ENCODE measurements at regions of chr12 and their contacts with region 1.

Region 1: DNA sequence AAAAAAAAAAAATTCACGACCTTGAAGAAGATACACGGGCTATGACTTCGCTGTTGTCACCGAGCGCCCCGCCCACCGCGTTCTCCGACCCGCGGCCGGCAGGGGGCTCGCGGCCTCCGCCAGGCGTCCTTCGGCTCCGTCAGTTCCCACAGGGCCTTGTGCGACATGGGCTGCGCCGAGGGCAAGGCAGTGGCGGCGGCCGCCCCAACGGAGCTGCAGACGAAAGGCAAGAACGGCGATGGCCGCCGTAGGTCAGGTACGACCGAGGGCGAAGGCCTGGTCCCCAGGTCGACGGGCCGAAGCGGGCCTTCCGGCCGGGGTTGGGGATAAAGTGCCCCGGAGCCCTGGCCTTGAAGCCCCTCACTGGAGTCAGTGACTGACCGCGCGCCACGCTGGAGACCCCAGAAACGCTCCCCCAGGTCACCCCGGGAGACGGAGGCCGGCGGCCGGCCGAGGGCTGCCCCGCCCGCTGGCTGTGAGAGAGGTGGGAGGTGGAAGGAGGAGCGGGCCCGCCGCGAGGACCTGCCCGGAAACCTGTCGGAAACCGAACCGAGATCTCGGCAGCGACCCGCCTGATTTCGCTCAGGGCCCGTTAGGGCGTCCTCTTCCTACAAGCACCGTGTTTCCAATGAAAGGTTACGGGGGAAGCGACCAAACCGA is at the start of gene TXNRD1:
- DNase-seq: peak; percentile 94
- H3K4me3 ChIP-seq: peak within 1 kb of the TSS; percentile 65 to 74 (median 65)
- H3K27ac ChIP-seq: peak within 1 kb of the TSS; percentile 81 to 89 (median 87)
- H3K4me1 ChIP-seq: peaks cover 23 to 39% (median 31%) of the 10 kb centered on the region in 4 donors
- H3K27me3 ChIP-seq: no peaks in the 10 kb centered on the region
- CTCF ChIP-seq: peak; percentile 85 to 87 (median 87)
- EP300 ChIP-seq: no peak
- POLR2A ChIP-seq: no peak
- total RNA-seq, gene TXNRD1: 243 to 594 (median 299) TPM

Region 2: DNA sequence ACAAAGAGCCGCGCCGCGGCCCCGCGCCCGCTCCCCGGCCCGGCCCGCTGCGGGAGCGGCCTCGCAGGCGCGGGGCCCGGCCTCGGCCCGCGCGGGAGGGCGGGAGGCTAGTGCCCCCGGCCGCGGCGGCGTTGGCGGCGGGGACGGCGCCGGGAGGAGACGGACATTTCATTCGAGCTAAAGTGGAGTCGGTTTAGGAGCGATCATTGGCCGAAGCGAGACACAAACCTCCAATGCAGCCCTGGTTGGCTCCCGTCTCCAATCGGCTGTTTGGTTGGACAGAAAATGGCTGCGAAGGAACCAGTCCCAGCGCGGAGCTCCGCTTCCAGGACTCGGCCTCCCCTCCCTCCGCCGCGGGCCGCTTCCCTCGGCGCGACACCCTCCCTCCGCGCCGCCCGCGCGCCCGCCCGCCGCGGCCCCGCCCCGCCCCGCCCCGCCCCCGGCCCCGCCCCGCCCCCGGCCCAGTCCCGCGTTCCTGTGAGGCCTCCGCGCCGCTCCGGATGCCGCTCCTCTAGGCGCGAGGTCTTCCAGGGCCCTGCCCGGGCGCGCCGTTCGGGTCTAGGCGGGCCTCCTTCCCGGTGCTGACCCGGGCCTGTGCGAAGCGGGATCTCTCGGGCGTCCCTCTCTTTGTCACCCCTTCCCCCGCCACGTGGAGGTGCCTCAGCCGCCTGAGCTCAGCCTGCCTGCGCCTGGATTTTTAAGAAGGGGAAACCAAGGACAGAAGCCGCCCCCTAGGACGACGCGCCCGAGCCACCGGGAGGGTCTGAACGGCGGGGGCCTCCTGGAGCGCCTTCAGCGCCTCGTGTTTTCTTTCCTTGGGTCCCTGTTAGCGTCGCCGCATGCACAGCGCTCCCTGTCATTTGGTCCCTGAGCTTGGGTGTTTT is 77.6 kb before region 1 on chr12 and contains the start of gene NFYB:
- intact Hi-C with region 1: loop called (anchors 10 kb)
- DNase-seq: peak; percentile 98
- H3K4me3 ChIP-seq: peak within 1 kb of the TSS; percentile 78 to 86 (median 84)
- H3K27ac ChIP-seq: peak within 1 kb of the TSS; percentile 94 to 97 (median 95)
- H3K4me1 ChIP-seq: peaks cover 24 to 53% (median 51%) of the 10 kb centered on the region in 4 donors
- H3K27me3 ChIP-seq: no peaks in the 10 kb centered on the region
- CTCF ChIP-seq: no peak
- EP300 ChIP-seq: no peak
- POLR2A ChIP-seq: peak; percentile 20
- total RNA-seq, gene NFYB: 67.7 to 90.9 (median 82.4) TPM

Region 3: DNA sequence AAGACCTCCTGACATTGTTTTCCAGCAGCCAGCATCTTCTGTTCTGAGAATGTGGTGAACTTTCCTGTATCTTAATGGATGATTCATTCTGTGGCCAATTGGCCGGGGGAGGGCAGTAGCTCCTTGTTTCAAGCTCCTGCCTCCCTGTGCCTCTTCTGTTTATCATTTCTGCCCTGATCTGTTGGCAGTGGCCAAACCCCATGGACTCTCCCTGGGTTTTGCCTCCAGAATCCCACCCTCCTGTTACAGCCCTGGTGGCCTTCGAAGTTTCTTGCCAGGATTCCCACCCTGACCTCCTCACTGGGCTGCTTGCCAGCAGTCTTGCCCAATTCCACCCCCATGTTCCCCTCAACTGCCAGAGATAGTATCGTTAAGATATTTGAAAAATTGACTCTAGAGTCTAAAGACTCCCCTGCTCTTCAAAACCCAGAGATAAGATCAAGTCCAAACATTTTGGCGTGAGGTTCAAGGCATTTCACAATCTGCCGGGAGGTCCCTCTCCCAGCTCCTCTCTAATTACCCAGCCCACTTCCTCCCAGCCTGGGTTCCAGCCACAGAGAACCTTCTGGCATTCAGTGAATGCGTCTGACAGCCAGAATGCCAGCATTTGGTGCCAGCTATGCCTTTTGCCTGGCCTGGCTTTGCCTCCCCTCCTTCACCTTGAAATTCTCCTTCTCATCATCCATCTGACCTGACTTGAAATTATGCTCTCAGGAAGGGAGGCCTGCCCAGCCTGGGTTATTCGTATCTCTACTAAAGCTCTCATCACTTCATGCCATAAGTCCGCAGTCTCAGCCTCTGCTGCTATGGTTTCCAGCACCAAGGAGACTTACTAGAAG is 37.9 kb before region 1 on chr12:
- intact Hi-C with region 1: loop called (anchors 5 kb)
- DNase-seq: peak; percentile 96
- H3K4me3 ChIP-seq: peak overlapping the region in 1 of 4 donors; percentile 5
- H3K27ac ChIP-seq: peak overlapping the region; percentile 79 to 91 (median 86)
- H3K4me1 ChIP-seq: peaks cover 32 to 68% (median 62%) of the 10 kb centered on the region in 4 donors
- H3K27me3 ChIP-seq: no peaks in the 10 kb centered on the region
- CTCF ChIP-seq: peak; percentile 40 to 51 (median 43)
- EP300 ChIP-seq: peak; percentile 90
- POLR2A ChIP-seq: no peak

Region 4: GRCh38 chr12:104288635-104289274 is 73.0 kb after region 1 on chr12:
- intact Hi-C with region 1: loop called (anchors 2 kb)
- DNase-seq: peak; percentile 94
- H3K4me3 ChIP-seq: peak overlapping the region; percentile 73 to 93 (median 82)
- H3K27ac ChIP-seq: peak overlapping the region; percentile 94 to 96 (median 94)
- H3K4me1 ChIP-seq: peaks cover 44 to 64% (median 57%) of the 10 kb centered on the region in 4 donors
- H3K27me3 ChIP-seq: no peaks in the 10 kb centered on the region
- CTCF ChIP-seq: no peak
- EP300 ChIP-seq: no peak
- POLR2A ChIP-seq: peak; percentile 35

Region 5: DNA sequence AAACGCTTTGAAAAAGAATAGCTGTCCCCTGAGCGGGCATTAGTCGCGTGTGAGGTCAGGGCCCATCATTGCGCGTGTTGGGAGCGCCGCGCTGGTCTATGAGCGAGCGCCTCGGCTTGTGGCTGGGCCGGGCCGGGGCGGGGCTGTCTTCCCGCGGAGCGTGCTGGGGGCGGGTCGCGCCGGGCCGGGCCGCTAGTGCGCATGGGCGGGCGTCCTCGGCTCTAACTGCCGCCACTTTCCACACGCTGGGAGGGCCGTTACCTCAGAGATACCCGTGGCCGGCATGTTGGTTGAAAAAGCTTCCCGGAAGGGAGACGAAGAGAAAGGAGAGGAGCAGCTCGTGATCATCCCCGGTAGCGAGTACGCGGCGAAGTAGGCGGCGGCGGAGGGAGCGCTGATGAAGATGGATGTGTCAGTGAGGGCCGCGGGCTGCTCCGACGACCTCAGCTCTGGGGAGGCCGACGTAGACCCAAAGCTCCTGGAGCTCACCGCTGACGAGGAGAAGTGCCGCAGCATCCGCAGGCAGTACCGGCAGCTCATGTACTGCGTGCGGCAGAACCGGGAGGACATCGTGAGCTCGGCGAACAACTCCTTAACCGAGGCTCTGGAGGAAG is 87.9 kb after region 1 on chr12 and contains the start of gene EID3:
- intact Hi-C with region 1: loop called (anchors 5 kb)
- DNase-seq: peak; percentile 94
- H3K4me3 ChIP-seq: peak within 1 kb of the TSS; percentile 55 to 63 (median 58)
- H3K27ac ChIP-seq: peak within 1 kb of the TSS; percentile 71 to 88 (median 84)
- H3K4me1 ChIP-seq: peaks cover 63 to 93% (median 90%) of the 10 kb centered on the region in 4 donors
- H3K27me3 ChIP-seq: no peaks in the 10 kb centered on the region
- CTCF ChIP-seq: no peak
- EP300 ChIP-seq: no peak
- POLR2A ChIP-seq: no peak
- total RNA-seq, gene EID3: 7.6 to 19.5 (median 12.1) TPM

Measured in esophagus muscularis mucosa (tissue), 4 donors.